ENCODE measurements at regions of chr15 and their contacts with region 1.

Region 1: DNA sequence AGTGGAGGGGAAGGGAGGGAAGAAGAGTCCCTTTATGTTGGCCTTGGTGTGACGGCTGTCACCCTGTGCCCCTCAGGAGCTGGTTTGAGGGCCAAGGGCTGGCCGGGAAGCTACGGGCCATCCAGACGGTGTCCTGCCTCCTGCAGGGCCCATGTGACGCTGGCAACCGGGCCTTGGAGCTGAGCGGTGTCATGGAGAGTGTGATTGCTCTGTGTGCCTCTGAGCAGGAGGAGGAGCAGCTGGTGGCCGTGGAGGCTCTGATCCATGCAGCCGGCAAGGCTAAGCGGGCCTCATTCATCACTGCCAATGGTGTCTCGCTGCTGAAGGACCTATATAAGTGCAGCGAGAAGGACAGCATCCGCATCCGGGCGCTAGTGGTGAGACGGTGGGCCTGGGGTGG is 8.1 kb upstream of the RCCD1 start:
- DNase-seq: no peak
- ATAC-seq: no peak
- H3K4me3 ChIP-seq: no peak overlapping the region
- H3K27ac ChIP-seq: no peak overlapping the region
- H3K4me1 ChIP-seq: peaks cover 6% of the 10 kb centered on the region
- H3K27me3 ChIP-seq: no peaks in the 10 kb centered on the region
- CTCF ChIP-seq: no peak

Region 2: DNA sequence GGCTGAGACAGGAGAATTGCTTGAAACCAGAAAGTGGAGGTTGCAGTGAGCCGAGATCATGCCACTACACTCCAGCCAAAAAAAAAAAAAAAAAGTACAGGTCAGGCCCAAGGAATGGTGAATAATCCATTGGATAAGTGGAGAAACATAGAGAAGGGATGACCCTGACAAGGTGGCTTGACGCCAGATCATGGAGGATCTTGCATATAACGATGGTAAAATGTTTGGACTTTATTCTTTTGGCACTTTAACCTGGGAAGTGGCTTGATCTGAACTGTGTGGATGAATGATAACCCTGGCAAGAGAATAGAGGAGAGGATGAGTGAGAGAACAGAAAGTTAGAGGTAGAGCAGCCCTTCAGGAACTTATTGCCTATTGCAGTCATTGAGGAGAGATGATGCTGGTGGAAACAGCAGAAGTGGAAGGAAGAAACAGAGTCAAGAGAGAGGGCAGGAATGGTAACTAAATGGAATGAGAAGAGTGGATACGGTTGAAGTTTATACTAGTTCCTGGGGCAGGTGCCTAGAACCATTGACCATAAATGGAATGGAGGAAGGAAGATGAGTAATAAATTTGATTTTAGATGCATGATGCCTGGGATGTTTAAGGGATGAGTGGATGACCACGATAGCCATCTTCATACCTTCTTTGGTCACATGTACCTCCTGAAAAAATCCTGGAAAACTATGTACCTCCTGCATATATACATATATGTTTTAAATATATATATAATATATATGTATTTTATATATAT is 171.6 kb before region 1 on chr15:
- CTCF ChIA-PET with region 1: no interaction called
- POLR2A ChIA-PET with region 1: interaction called, 16 read pairs
- in situ Hi-C with region 1: no loop called
- intact Hi-C with region 1: no loop called
- DNase-seq: peak; percentile 17
- ATAC-seq: no peak
- H3K4me3 ChIP-seq: no peak overlapping the region
- H3K27ac ChIP-seq: no peak overlapping the region
- H3K4me1 ChIP-seq: no peaks in the 10 kb centered on the region
- H3K27me3 ChIP-seq: no peaks in the 10 kb centered on the region
- CTCF ChIP-seq: no peak

Region 3: DNA sequence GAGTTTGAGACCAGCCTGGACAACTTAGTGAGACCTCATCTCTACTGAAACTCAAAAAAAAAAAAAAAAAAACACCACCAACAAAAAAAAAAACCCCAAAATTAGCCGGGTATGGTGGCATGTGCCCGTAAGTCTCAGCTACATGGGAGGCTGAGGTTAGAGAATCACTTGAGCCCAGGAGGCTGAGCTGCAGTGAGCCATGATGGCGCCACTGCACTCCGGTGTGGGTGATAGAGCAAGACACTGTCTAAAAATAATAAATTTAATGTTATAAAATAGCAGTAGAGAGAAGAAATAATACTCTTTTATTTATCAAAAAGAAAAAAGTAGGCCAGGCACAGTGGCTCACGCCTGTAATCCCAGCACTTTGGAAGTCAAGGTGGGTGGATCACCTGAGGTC is 25.6 kb after region 1 on chr15:
- CTCF ChIA-PET with region 1: no interaction called
- POLR2A ChIA-PET with region 1: interaction called, 12 read pairs
- in situ Hi-C with region 1: no loop called
- intact Hi-C with region 1: no loop called
- DNase-seq: no peak
- ATAC-seq: no peak
- H3K4me3 ChIP-seq: no peak overlapping the region
- H3K27ac ChIP-seq: no peak overlapping the region
- H3K4me1 ChIP-seq: no peaks in the 10 kb centered on the region
- H3K27me3 ChIP-seq: no peaks in the 10 kb centered on the region
- CTCF ChIP-seq: no peak